ENCODE measurements at regions of chr6 and their contacts with region 1.

Region 1: DNA sequence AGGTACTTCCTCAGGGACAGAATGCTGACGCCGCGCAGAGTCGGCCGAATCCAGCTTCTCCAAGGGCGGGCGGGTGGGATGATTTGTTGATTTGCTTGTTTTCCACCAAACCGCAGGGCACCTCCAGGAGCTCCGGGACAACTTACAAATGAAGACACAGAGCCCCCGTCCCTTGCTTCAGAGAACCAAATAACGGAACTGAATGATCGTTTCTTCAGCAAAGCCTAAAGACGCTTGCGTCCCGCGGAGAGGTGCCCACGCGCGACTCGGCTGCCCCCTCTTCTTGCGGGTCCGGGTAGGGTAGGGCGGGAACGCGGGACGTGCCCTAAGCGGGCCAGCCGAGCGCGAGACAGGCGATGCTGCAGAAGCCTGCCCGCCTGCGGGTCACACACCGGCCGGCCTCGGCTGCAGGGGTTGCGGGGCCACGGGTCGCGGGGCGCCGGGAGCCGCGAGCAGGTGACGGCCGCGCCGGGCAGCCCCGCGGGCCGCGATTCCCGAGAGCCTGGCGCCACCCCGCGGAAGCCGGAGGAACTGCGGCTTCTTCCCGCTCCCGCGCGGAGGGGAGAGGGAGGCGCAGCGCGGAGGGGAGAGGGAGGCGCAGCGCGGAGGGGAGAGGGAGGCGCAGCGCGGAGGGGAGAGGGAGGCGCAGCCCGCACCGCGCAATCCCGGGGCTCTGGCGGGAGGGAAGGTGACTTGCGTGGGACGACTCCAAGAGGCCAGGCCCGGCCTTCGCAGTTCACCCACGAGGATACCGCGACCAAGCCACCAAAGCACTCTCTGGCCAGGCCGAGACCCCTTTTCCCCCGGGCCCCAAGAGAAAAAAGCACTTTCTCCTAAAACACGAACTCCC is 7.7 kb upstream of the FOXF2 start:
- DNase-seq: peak; percentile 49
- H3K4me3 ChIP-seq: peak overlapping the region in 3 of 4 donors; percentile 8 to 43 (median 31)
- H3K27ac ChIP-seq: peak overlapping the region; percentile 82 to 88 (median 86)
- H3K4me1 ChIP-seq: peaks cover 5 to 50% (median 33%) of the 10 kb centered on the region in 4 donors
- H3K27me3 ChIP-seq: peaks cover 100% of the 10 kb centered on the region
- CTCF ChIP-seq: peak; percentile 59 to 90 (median 83)
- EP300 ChIP-seq: no peak
- POLR2A ChIP-seq: no peak

Region 2: GRCh38 chr6:582370-582769 is 799.3 kb before region 1 on chr6:
- in situ Hi-C with region 1: no loop called
- intact Hi-C with region 1: loop called (anchors 5 kb)
- DNase-seq: no peak
- H3K4me3 ChIP-seq: no peak overlapping the region
- H3K27ac ChIP-seq: peak overlapping the region; percentile 14 to 51 (median 27)
- H3K4me1 ChIP-seq: no peaks in the 10 kb centered on the region
- H3K27me3 ChIP-seq: no peaks in the 10 kb centered on the region
- CTCF ChIP-seq: no peak
- EP300 ChIP-seq: no peak
- POLR2A ChIP-seq: no peak

Region 3: GRCh38 chr6:710601-711571 is 670.8 kb before region 1 on chr6:
- in situ Hi-C with region 1: loop called in 1 of 4 experiments (anchors 25 kb)
- intact Hi-C with region 1: loop called (anchors 1 kb)
- DNase-seq: peak; percentile 60
- H3K4me3 ChIP-seq: peak overlapping the region; percentile 34 to 57 (median 43)
- H3K27ac ChIP-seq: peak overlapping the region; percentile 85 to 92 (median 90)
- H3K4me1 ChIP-seq: peaks cover 0 to 16% (median 2%) of the 10 kb centered on the region in 4 donors
- H3K27me3 ChIP-seq: peaks cover 31% of the 10 kb centered on the region
- CTCF ChIP-seq: no peak
- EP300 ChIP-seq: no peak
- POLR2A ChIP-seq: peak; percentile 59

Region 4: DNA sequence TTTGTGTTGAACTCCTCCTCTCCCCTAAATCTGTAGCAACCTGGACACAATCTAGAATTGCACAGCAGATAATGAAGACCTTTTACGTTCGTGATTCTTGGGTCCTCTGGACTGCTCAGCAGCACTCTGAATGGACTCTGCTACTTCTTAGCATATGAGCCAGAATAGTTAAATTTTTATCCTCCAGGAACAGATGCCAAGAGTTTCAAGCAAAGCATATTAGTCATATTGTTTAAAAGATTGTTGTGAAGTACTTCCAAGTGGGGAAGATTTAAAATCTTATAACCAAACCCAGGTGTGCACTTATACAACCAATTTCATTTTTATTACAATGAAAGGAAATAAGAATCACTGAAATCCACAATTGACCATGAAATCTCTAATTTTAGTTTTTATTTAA is 569.9 kb before region 1 on chr6:
- in situ Hi-C with region 1: no loop called
- intact Hi-C with region 1: no loop called
- DNase-seq: no peak
- H3K4me3 ChIP-seq: no peak overlapping the region
- H3K27ac ChIP-seq: no peak overlapping the region
- H3K4me1 ChIP-seq: no peaks in the 10 kb centered on the region
- H3K27me3 ChIP-seq: no peaks in the 10 kb centered on the region
- CTCF ChIP-seq: no peak
- EP300 ChIP-seq: no peak
- POLR2A ChIP-seq: no peak

Measured in transverse colon (tissue), 4 donors.